Mammary epithelial cell (primary cell): ENCODE measurements at regions of chr13 and their contacts with region 1.

Region 1: GRCh38 chr13:57123681-57124080 is 17.0 kb upstream of the PRR20A start:
- DNase-seq: no peak
- H3K4me3 ChIP-seq: no peak overlapping the region
- H3K27ac ChIP-seq: no peak overlapping the region
- H3K4me1 ChIP-seq: no peaks in the 10 kb centered on the region
- H3K27me3 ChIP-seq: no peaks in the 10 kb centered on the region
- CTCF ChIP-seq: no peak

Region 2: GRCh38 chr13:57212989-57213388 is 89.3 kb after region 1 on chr13:
- CTCF ChIA-PET with region 1: no interaction called
- dilution Hi-C with region 1: no loop called
- in situ Hi-C with region 1: loop called in 1 of 2 experiments (anchors 25 kb)
- intact Hi-C with region 1: no loop called
- DNase-seq: no peak
- H3K4me3 ChIP-seq: no peak overlapping the region
- H3K27ac ChIP-seq: no peak overlapping the region
- H3K4me1 ChIP-seq: no peaks in the 10 kb centered on the region
- H3K27me3 ChIP-seq: no peaks in the 10 kb centered on the region
- CTCF ChIP-seq: no peak

Region 3: GRCh38 chr13:58500885-58501404 is 1377.3 kb after region 1 on chr13:
- CTCF ChIA-PET with region 1: no interaction called
- dilution Hi-C with region 1: no loop called
- in situ Hi-C with region 1: no loop called
- intact Hi-C with region 1: no loop called
- DNase-seq: no peak
- H3K4me3 ChIP-seq: no peak overlapping the region
- H3K27ac ChIP-seq: no peak overlapping the region
- H3K4me1 ChIP-seq: no peaks in the 10 kb centered on the region
- H3K27me3 ChIP-seq: no peaks in the 10 kb centered on the region
- CTCF ChIP-seq: no peak